ENCODE measurements at regions of chr7 and their contacts with region 1.

Region 1: DNA sequence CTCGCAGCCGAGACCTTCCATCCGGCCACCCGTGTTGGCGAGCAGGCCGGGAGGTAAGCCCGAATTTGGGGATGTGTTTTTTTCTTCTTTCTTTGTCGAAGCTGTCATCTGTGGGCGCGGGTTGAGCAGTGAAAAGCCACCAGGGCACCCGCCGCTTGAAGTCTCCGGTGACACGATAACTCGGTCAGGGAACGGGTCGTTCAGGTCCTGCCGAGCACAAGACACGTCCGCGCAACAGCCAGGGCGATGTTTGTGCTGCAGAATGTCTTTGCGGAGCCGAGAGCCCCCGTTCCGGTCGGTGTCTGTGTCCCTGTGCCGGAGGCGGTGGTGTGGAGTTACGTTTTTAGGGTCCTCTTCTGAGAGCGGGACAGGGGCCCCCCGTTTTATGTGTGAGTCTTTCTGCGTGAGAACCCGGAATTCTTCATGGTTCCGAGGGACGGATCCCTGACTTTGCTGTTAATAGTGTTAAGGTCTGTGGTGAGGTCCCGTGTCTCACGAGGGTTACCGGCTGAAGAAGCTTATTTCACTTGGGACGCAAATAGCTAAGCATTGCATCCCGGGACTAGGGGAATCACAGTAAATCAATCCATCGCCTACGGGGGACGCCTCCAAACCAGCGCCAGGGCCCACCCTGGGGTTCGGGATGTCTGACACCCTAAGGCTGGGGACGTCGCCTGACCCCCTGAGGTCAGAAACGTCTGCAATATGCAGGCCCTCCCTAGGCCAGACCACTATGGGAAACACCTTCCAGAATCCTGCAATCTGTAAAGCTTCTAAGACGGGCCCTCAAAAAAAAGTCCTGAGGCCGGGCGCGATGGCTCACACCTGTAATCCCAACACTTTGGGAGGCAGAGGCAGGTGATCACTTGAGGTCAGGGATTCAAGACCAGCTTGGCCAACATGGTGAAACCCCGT is 99.5 kb downstream of the ELFN1 start:
- DNase-seq: no peak

Region 2: GRCh38 chr7:1619152-1620006 is 150.2 kb before region 1 on chr7:
- in situ Hi-C with region 1: loop called (anchors 10 kb)
- DNase-seq: no peak

Region 3: DNA sequence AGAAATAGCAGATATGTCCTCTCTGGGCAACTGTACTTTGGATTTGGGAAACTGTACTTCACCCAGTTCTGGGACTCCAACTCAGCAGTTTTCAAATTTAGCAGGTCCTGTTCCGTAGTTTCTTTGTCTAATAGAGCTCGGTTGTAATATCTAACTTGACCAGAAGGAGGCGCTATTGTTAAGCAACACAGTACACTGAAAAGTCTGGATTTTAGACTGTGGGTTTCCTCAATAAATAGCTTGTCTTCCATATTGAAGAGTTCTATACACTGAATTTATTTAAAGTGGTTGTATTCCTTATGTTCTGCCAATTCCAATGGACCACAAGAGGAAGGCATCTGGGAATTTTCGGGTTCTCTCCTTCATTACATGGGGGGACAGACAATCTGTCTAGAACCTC is 59.6 kb before region 1 on chr7:
- in situ Hi-C with region 1: no loop called
- DNase-seq: no peak

Region 4: GRCh38 chr7:1819259-1819841 is 49.8 kb after region 1 on chr7:
- in situ Hi-C with region 1: no loop called
- DNase-seq: peak; percentile 29

Region 5: DNA sequence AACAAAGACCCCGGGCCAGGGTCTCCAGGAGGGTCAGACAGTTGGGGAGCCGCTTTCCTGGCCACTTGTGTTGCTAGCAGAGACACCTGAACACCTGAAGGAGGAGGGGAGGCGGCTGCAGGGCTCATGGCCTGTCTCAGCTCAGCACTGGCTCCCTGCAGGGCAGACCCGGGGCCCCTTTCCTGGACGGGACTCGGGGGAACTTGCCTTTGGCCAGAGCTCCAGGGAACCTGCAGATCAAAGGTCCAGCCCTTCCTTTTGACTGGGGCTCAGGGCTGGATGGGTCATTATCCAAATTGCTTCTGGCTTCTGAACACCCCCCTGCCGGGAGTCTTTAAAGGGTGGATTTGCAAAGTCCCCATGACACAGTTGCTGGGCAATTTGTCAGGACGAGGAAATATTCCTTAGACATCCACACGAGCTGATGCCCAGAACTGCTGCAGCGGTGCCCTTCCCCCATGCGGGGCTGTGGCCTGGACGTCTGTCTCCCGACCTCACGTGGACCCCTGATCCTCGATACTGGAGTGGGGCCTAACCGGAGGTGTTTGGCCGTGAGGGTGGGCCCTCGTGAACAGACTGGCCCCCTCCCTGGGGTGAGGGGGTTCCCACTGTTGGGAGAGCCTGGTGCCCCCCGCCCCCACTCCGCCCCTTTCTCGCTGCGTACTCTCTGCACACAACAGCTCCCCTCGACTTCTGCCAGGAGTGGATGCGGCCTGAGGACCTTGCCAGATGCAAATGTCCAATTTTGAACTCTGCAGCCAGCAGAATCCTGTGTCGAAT is 94.8 kb after region 1 on chr7:
- in situ Hi-C with region 1: loop called (anchors 10 kb)
- DNase-seq: peak; percentile 17